CD8-positive, alpha-beta memory T cell (primary cell): ENCODE measurements at regions of chr11 and their contacts with region 1.

Region 1: DNA sequence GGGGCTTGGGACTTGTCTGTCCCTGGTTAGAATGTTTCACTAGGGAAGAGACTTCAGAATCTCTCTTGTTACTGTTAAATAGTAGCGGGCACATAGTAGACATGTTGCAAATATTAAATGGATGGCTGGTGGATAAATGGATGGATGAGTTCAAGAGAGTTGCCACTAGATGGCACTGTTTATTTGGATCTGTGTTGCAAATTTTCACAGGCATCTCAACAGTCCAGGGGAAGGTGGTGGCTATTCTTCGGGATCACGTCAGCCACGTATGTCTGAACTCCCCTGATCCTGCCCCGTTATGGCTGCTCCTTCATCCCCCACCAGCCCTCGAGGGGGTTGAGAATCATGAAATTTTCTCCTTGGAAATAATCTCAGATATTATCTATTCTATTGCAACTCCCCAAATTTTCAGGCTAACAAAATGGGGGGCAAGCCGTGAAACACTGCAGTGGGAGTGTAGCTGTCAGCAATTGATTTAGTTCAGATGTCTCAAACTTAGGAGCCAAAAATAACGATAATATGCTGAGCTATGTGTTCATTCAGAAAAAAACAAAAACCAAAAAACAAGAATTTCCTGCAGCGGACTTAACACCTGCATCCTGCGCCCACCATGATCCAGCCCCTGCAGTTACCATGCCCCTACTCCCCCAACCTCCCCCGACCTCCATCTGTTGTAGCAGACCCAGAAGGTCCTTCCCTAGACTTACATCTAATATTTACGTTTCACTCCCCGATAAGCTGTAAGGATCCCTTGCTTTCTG is 29.1 kb upstream of the BIRC3 start:
- DNase-seq: peak in 4 of 5 donors; percentile 17 to 66 (median 62)
- H3K4me3 ChIP-seq: no peak overlapping the region
- H3K4me3 Mint-ChIP-seq: peak overlapping the region in 1 of 7 donors; percentile 30
- H3K27ac ChIP-seq: no peak overlapping the region
- H3K27ac Mint-ChIP-seq: peak overlapping the region in 4 of 8 donors; percentile 22 to 56 (median 48)
- H3K4me1 ChIP-seq: peaks cover 4% of the 10 kb centered on the region
- H3K4me1 Mint-ChIP-seq: peaks cover 15 to 30% (median 18%) of the 10 kb centered on the region in 3 donors
- H3K27me3 ChIP-seq: no peaks in the 10 kb centered on the region
- H3K27me3 Mint-ChIP-seq: peaks cover 0 to 2% of the 10 kb centered on the region in 2 donors

Region 2: GRCh38 chr11:102187416-102188151 is 100.6 kb before region 1 on chr11:
- CTCF ChIA-PET with region 1: no interaction called
- POLR2A ChIA-PET with region 1: no interaction called
- DNase-seq: no peak
- H3K4me3 ChIP-seq: no peak overlapping the region
- H3K4me3 Mint-ChIP-seq: no peak overlapping the region
- H3K27ac ChIP-seq: no peak overlapping the region
- H3K27ac Mint-ChIP-seq: no peak overlapping the region
- H3K4me1 ChIP-seq: no peaks in the 10 kb centered on the region
- H3K4me1 Mint-ChIP-seq: no peaks in the 10 kb centered on the region
- H3K27me3 ChIP-seq: no peaks in the 10 kb centered on the region
- H3K27me3 Mint-ChIP-seq: peaks cover 6 to 19% of the 10 kb centered on the region in 2 donors

Region 3: GRCh38 chr11:102306048-102306585 is 18.0 kb after region 1 on chr11:
- CTCF ChIA-PET with region 1: interaction called, 45 read pairs
- POLR2A ChIA-PET with region 1: interaction called, 14 read pairs
- DNase-seq: no peak
- H3K4me3 ChIP-seq: peak overlapping the region; percentile 24
- H3K4me3 Mint-ChIP-seq: peak overlapping the region; percentile 24 to 78 (median 61)
- H3K27ac ChIP-seq: no peak overlapping the region
- H3K27ac Mint-ChIP-seq: peak overlapping the region; percentile 76 to 99 (median 90)
- H3K4me1 ChIP-seq: peaks cover 67% of the 10 kb centered on the region
- H3K4me1 Mint-ChIP-seq: peaks cover 55 to 78% (median 77%) of the 10 kb centered on the region in 3 donors
- H3K27me3 ChIP-seq: no peaks in the 10 kb centered on the region
- H3K27me3 Mint-ChIP-seq: peaks cover 0 to 1% of the 10 kb centered on the region in 2 donors

Region 4: DNA sequence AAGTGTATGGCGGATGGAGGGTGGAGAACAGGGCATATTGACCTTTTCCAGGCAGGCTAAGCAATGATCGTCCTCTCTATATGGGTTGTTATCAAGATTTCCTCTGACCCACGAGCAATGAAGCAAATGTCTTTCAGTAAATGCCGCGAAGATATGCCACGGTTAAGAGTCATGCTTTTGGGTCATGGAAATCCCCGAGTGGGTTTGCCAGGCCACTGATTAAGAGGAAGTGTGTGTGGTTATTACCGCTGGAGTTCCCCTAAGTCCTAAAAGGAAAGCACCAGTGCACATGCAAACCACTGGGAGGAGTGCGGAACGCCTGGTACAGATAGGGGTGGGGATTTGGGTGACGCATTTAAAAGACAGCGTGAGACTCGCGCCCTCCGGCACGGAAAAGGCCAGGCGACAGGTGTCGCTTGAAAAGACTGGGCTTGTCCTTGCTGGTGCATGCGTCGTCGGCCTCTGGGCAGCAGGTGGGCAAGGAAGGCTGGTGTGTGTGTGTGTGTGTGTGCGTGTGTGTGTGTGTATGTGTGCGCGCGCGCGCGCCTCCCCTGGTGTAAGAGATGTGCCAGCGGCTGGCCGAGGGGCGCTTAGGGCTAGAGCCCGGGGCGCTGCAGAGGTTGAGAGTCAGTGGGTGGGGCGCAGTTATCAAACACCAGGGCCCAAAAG is 29.1 kb after region 1 on chr11 and contains the start of gene BIRC3:
- CTCF ChIA-PET with region 1: interaction called, 63 read pairs
- POLR2A ChIA-PET with region 1: interaction called, 19 read pairs
- DNase-seq: peak; percentile 84 to 97 (median 93)
- H3K4me3 ChIP-seq: peak within 1 kb of the TSS; percentile 89
- H3K4me3 Mint-ChIP-seq: peak within 1 kb of the TSS; percentile 90 to 98 (median 95)
- H3K27ac ChIP-seq: peak within 1 kb of the TSS; percentile 86
- H3K27ac Mint-ChIP-seq: peak within 1 kb of the TSS; percentile 92 to 100 (median 99)
- H3K4me1 ChIP-seq: peaks cover 58% of the 10 kb centered on the region
- H3K4me1 Mint-ChIP-seq: peaks cover 68 to 79% (median 69%) of the 10 kb centered on the region in 3 donors
- H3K27me3 ChIP-seq: no peaks in the 10 kb centered on the region
- H3K27me3 Mint-ChIP-seq: peaks cover 0 to 3% of the 10 kb centered on the region in 2 donors
- total RNA-seq, gene BIRC3: 191 to 199 TPM

Region 5: GRCh38 chr11:102495161-102496042 is 207.3 kb after region 1 on chr11:
- CTCF ChIA-PET with region 1: interaction called, 22 read pairs
- POLR2A ChIA-PET with region 1: no interaction called
- DNase-seq: peak in 4 of 5 donors; percentile 8 to 74 (median 61)
- H3K4me3 ChIP-seq: no peak overlapping the region
- H3K4me3 Mint-ChIP-seq: peak overlapping the region in 1 of 7 donors; percentile 48
- H3K27ac ChIP-seq: no peak overlapping the region
- H3K27ac Mint-ChIP-seq: peak overlapping the region in 1 of 8 donors; percentile 23
- H3K4me1 ChIP-seq: peaks cover 5% of the 10 kb centered on the region
- H3K4me1 Mint-ChIP-seq: peaks cover 0 to 8% (median 6%) of the 10 kb centered on the region in 3 donors
- H3K27me3 ChIP-seq: no peaks in the 10 kb centered on the region
- H3K27me3 Mint-ChIP-seq: peaks cover 4 to 29% of the 10 kb centered on the region in 2 donors